Activated CD8-positive, alpha-beta T cell treated with anti-CD3 and anti-CD28 coated beads, Interleukin-2, amount 10 ng/mL, durations not matched to agents 7 days and 5 days (primary cell): ENCODE measurements at regions of chr13 and their contacts with region 1.

Region 1: GRCh38 chr13:26929971-26930730 is 169.6 kb upstream of the GPR12 start:
- DNase-seq: peak; percentile 78
- ATAC-seq: peak; percentile 81
- H3K4me3 Mint-ChIP-seq: no peak overlapping the region
- H3K27ac Mint-ChIP-seq: no peak overlapping the region
- H3K4me1 Mint-ChIP-seq: peaks cover 4% of the 10 kb centered on the region
- H3K27me3 Mint-ChIP-seq: peaks cover 4% of the 10 kb centered on the region

Region 2: DNA sequence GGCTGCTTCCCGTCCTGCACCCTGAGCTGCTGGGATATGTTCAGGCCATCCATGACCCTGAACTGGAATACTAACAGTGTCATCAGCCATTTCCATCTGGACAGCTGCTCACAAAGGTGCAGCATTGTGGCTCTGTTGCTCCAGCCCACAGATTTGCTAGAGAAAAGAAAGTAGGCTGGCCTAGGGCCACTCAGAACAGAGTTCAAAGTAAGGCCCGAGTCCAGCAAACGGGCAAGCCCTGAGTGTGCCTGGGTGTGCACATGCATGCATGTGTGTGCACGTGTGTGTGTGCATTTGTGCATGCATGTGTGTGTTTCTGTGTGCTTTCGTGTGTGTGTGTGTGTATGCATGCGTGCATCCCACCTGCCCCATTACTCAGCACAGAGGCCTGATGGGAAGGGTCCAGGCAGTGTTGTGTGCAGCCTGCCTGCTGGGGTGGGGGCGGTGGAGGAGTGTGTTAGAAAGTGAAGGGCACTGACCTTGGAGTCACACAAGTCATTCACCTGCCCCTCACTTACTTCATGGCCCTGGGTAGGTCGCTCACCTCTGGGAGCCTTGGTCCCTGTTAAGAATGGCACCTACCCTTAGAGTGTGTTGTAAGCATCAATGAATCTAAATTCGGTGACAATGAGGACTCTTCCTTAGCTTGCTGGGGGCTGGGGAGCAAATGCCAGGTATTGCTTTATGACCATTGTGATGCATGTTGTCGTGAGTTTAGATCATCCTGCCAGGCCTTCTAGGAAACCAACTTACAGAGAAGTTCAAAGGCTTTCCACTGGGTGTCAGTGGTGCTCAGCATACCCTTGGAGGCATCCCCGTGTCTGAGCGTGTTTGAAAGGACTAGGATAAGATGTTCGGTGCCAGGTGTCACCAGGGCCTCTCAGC is 222.8 kb before region 1 on chr13:
- CTCF ChIA-PET with region 1: interaction called, 10 read pairs
- POLR2A ChIA-PET with region 1: no interaction called
- DNase-seq: peak; percentile 74
- ATAC-seq: peak; percentile 78
- H3K4me3 Mint-ChIP-seq: no peak overlapping the region
- H3K27ac Mint-ChIP-seq: no peak overlapping the region
- H3K4me1 Mint-ChIP-seq: peaks cover 6% of the 10 kb centered on the region
- H3K27me3 Mint-ChIP-seq: peaks cover 2% of the 10 kb centered on the region

Region 3: GRCh38 chr13:26914624-26915023 is 15.5 kb before region 1 on chr13:
- CTCF ChIA-PET with region 1: interaction called, 14 read pairs
- POLR2A ChIA-PET with region 1: no interaction called
- DNase-seq: peak; percentile 32
- ATAC-seq: peak; percentile 42
- H3K4me3 Mint-ChIP-seq: no peak overlapping the region
- H3K27ac Mint-ChIP-seq: no peak overlapping the region
- H3K4me1 Mint-ChIP-seq: peaks cover 7% of the 10 kb centered on the region
- H3K27me3 Mint-ChIP-seq: peaks cover 2% of the 10 kb centered on the region

Region 4: GRCh38 chr13:26941345-26942174 is 11.4 kb after region 1 on chr13:
- CTCF ChIA-PET with region 1: interaction called, 15 read pairs
- POLR2A ChIA-PET with region 1: no interaction called
- DNase-seq: no peak
- ATAC-seq: no peak
- H3K4me3 Mint-ChIP-seq: no peak overlapping the region
- H3K27ac Mint-ChIP-seq: no peak overlapping the region
- H3K4me1 Mint-ChIP-seq: no peaks in the 10 kb centered on the region
- H3K27me3 Mint-ChIP-seq: peaks cover 7% of the 10 kb centered on the region